Heart left ventricle (tissue), 16 donors: ENCODE measurements at regions of chr13 and their contacts with region 1.

Region 1: GRCh38 chr13:111153279-111153976 is 38.3 kb downstream of the ARHGEF7 start:
- DNase-seq: peak; percentile 93 to 96 (median 95)
- ATAC-seq: peak; percentile 92 to 99 (median 97)
- H3K4me3 ChIP-seq: peak overlapping the region; percentile 63 to 96 (median 90)
- H3K27ac ChIP-seq: peak overlapping the region; percentile 91 to 99 (median 96)
- H3K4me1 ChIP-seq: peaks cover 5 to 47% (median 26%) of the 10 kb centered on the region in 12 donors
- H3K27me3 ChIP-seq: no peaks in the 10 kb centered on the region
- CTCF ChIP-seq: peak in 10 of 12 donors; percentile 6 to 56 (median 32)
- POLR2A ChIP-seq: peak; percentile 63 to 89

Region 2: GRCh38 chr13:111066544-111066943 is 86.9 kb before region 1 on chr13:
- intact Hi-C with region 1: loop called in 4 of 10 experiments (anchors 5 to 10 kb)
- DNase-seq: peak in 2 of 5 donors; percentile 49 to 61
- ATAC-seq: peak; percentile 37 to 68 (median 58)
- H3K4me3 ChIP-seq: peak overlapping the region in 8 of 12 donors; percentile 57 to 78 (median 67)
- H3K27ac ChIP-seq: peak overlapping the region in 8 of 12 donors; percentile 1 to 67 (median 64)
- H3K4me1 ChIP-seq: peaks cover 0 to 13% (median 0%) of the 10 kb centered on the region in 12 donors
- H3K27me3 ChIP-seq: peaks cover 0 to 28% (median 0%) of the 10 kb centered on the region in 9 donors
- CTCF ChIP-seq: no peak
- POLR2A ChIP-seq: no peak

Region 3: DNA sequence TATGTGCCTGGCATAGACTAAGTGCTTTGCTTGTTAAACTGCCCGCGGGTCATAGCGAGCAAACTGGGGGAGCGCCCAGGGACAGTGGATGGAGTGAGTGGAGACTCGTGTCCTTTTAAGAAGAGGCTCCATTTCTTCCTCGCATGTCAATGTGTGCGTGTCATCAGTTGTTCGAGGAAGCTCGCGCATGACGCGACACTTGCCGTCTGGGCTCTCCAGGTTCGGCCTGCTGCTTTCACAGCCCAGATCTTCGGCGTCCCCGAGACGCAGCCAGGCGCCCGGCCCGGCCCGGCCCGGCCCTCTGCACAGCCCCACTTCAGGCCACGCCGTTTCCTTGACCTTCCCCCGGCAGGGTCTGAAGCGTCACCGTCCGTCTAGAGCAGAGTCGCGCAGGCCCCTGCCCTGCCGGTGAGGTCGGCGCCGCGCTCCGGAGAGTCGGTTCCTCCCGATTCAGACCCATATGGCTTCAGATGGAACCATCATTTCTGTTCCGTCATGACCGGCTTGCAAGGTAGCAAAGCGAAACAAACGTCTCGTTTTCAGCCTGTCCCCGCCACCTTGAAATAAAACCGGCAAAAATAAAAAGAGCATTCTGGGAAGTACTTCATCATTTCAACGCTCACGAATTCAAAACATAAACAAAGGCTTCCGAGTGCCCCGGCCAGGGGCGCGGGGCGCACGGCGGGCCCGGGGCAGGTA is 38.9 kb before region 1 on chr13:
- intact Hi-C with region 1: loop called in 1 of 10 experiments (anchors 2 kb)
- DNase-seq: peak; percentile 46 to 79 (median 61)
- ATAC-seq: peak in 3 of 4 donors; percentile 69 to 78 (median 70)
- H3K4me3 ChIP-seq: peak overlapping the region; percentile 39 to 78 (median 64)
- H3K27ac ChIP-seq: peak overlapping the region; percentile 20 to 88 (median 78)
- H3K4me1 ChIP-seq: peaks cover 0 to 22% (median 9%) of the 10 kb centered on the region in 12 donors
- H3K27me3 ChIP-seq: peaks cover 0 to 68% (median 5%) of the 10 kb centered on the region in 9 donors
- CTCF ChIP-seq: no peak
- POLR2A ChIP-seq: no peak

Region 4: GRCh38 chr13:111202745-111203144 is 49.3 kb after region 1 on chr13:
- intact Hi-C with region 1: loop called in 1 of 10 experiments (anchors 5 kb)
- DNase-seq: peak in 3 of 5 donors; percentile 45 to 73 (median 62)
- ATAC-seq: peak; percentile 66 to 90 (median 80)
- H3K4me3 ChIP-seq: peak overlapping the region in 11 of 12 donors; percentile 22 to 65 (median 51)
- H3K27ac ChIP-seq: peak overlapping the region; percentile 56 to 89 (median 79)
- H3K4me1 ChIP-seq: peaks cover 13 to 77% (median 52%) of the 10 kb centered on the region in 12 donors
- H3K27me3 ChIP-seq: no peaks in the 10 kb centered on the region
- CTCF ChIP-seq: no peak
- POLR2A ChIP-seq: peak in 1 of 2 donors; percentile 24

Region 5: GRCh38 chr13:111216166-111216960 is 62.9 kb after region 1 on chr13:
- intact Hi-C with region 1: loop called in 8 of 10 experiments (anchors 5 kb)
- DNase-seq: peak in 1 of 5 donors; percentile 37
- ATAC-seq: peak; percentile 40 to 61 (median 43)
- H3K4me3 ChIP-seq: no peak overlapping the region
- H3K27ac ChIP-seq: peak overlapping the region in 9 of 12 donors; percentile 8 to 65 (median 22)
- H3K4me1 ChIP-seq: peaks cover 0 to 92% (median 73%) of the 10 kb centered on the region in 12 donors
- H3K27me3 ChIP-seq: no peaks in the 10 kb centered on the region
- CTCF ChIP-seq: peak in 11 of 12 donors; percentile 19 to 57 (median 42)
- POLR2A ChIP-seq: no peak

Region 6: DNA sequence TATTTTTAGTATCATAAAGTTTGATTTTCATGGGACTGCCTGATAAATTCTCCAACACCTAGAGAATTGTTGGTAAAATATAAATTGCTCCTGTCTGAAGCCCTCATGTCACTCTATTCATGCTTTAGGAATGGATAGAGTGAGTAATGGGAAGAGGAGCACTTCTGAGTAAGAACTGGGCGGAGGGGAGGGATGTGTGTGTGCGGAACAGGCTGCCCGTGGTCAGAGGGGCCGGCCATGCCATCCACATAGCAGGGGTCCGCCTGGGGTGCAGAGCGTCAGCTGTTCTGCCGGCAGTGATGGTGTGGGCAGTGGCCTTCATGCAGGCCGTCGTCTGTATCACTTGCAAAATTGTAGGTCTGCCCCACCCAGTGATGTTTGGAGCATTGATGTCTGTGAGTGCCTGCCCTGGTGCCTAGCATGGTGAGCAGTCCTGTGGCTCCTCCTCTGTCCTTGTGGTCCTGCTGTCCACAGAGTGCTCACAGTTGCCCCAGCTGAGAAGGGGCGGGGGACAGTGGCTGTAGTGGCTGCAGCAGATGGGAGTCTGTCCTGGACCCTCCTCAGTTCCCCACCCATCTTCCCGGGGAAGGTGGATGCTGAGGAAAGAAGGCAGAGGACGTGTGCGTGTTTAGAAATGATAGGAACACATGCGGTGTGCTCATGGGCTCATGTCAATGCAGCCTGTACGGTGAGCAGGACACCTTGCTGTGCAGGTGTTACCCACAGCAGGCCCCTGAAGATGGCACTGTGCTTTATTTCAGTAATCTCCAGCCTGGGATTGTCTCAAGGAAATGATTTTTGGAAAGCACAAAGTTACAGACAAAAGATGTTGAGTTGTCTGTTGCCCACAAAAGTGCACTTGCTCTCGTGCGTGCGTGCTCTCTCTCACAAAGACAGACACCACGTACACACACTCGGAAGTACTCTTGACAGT is 117.6 kb after region 1 on chr13:
- intact Hi-C with region 1: loop called in 1 of 10 experiments (anchors 10 kb)
- DNase-seq: no peak
- ATAC-seq: peak in 1 of 4 donors; percentile 41
- H3K4me3 ChIP-seq: no peak overlapping the region
- H3K27ac ChIP-seq: peak overlapping the region in 3 of 12 donors; percentile 12 to 25 (median 20)
- H3K4me1 ChIP-seq: peaks cover 0 to 55% (median 22%) of the 10 kb centered on the region in 12 donors
- H3K27me3 ChIP-seq: no peaks in the 10 kb centered on the region
- CTCF ChIP-seq: no peak
- POLR2A ChIP-seq: no peak

Region 7: DNA sequence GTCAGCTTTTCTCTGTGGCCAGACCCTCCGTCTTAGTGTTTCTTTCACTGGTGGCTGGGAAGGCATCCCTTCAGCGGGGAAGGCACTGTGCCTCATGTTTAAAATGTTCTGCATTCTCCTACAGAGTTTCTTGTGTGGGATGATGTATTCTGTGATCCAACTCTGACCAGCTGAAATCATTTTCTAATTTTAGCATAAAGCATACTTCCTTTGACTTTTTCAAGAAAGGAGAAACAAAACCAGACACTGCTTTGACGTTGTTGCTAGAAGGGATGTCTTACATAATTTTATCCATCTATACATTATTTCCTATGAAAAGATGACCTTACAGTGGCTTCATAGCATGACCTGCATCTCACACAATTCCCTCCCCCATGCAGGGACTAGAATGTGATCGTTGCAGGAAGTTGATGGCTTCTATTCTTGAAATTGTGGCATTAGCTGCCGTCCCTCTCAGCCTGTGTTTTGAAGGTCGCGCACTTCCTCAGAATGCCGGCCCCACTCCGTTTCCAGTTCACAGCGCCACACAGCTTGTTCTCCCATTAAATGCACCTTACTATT is 128.4 kb after region 1 on chr13:
- intact Hi-C with region 1: loop called in 2 of 10 experiments (anchors 5 to 10 kb)
- DNase-seq: peak in 2 of 5 donors; percentile 46 to 54
- ATAC-seq: peak; percentile 25 to 58 (median 41)
- H3K4me3 ChIP-seq: peak overlapping the region in 1 of 12 donors; percentile 9
- H3K27ac ChIP-seq: peak overlapping the region; percentile 43 to 83 (median 72)
- H3K4me1 ChIP-seq: peaks cover 11 to 57% (median 40%) of the 10 kb centered on the region in 12 donors
- H3K27me3 ChIP-seq: no peaks in the 10 kb centered on the region
- CTCF ChIP-seq: peak in 2 of 12 donors; percentile 22 to 26
- POLR2A ChIP-seq: no peak